ENCODE measurements at regions of chr10 and their contacts with region 1.

Region 1: DNA sequence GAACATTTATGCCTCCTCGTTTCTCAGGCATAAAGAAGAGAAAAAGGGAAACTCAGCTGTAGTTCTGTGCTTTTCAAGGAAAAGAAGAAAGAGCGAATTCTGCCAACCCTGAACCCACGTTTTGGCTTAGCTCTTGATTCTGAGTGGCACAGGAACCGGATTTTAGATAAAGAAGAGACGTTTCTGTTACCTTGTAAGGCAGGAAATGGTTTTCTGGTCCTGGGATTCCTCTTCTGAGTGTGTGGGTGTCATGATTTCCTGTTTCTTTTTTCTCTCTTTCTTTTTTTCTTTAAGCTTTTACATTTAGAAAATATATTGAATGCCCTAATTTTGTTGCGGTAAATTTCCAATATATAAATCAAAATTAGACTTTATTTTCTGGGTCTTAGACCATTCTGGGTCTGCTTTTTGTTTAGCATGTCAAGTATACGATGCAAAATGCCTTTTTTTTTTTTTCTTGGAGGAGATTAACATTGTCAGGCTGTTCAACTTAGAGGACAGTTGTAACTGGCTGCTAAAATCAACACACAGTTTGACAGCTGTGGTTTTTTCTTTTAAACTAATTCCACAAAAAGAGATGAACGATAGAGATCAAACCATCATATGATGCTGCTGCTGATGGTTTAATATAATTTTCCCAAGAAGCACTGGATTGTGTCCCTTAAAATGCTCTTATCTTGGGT is 190.8 kb downstream of the GATA3 start:
- DNase-seq: no peak
- H3K4me3 Mint-ChIP-seq: peak overlapping the region; percentile 58
- H3K27ac Mint-ChIP-seq: peak overlapping the region; percentile 93
- H3K4me1 Mint-ChIP-seq: peaks cover 76% of the 10 kb centered on the region
- H3K27me3 Mint-ChIP-seq: no peaks in the 10 kb centered on the region

Region 2: DNA sequence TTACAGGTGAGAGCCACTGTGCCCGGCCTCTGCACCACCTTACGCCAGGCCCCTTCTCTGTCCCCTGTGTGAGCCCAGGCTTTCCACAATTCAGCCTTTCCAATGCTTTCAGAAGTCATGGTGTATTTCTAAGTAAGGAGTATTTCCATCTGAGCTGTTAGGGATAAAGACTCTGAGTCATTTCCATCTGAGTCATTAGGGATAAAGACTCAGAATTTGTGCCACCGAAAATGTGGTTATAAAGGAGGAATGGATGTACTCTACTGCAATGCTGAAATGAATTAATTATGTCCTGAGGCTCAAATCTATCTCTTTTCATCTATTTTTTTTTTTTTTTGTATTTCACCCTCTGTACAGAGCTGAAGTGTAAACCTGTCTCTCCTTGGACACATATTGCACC is 106.8 kb before region 1 on chr10:
- intact Hi-C with region 1: loop called (anchors 1 kb)
- DNase-seq: no peak
- H3K4me3 Mint-ChIP-seq: peak overlapping the region; percentile 79
- H3K27ac Mint-ChIP-seq: peak overlapping the region; percentile 93
- H3K4me1 Mint-ChIP-seq: peaks cover 63% of the 10 kb centered on the region
- H3K27me3 Mint-ChIP-seq: no peaks in the 10 kb centered on the region

Region 3: DNA sequence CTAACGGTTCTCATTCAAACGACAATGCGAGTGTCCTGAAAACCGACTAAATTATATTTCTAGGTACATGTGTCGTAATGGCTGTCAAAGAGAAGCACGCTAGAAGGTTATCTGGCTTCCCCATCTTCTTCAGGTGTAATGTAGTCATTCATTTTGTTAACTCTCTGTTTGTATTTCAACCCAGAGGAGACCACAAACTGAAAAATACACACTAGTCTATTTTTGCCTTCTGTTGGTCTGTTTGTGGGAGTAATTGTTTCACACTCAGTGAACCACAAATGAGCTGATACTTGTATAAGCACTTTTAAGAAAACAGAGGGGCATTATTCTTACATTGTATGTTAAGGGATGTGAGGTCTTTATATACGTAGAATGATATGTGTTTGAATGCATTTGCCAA is 115.1 kb after region 1 on chr10:
- intact Hi-C with region 1: loop called (anchors 1 kb)
- DNase-seq: peak; percentile 37
- H3K4me3 Mint-ChIP-seq: peak overlapping the region; percentile 70
- H3K27ac Mint-ChIP-seq: peak overlapping the region; percentile 88
- H3K4me1 Mint-ChIP-seq: peaks cover 79% of the 10 kb centered on the region
- H3K27me3 Mint-ChIP-seq: no peaks in the 10 kb centered on the region

Region 4: DNA sequence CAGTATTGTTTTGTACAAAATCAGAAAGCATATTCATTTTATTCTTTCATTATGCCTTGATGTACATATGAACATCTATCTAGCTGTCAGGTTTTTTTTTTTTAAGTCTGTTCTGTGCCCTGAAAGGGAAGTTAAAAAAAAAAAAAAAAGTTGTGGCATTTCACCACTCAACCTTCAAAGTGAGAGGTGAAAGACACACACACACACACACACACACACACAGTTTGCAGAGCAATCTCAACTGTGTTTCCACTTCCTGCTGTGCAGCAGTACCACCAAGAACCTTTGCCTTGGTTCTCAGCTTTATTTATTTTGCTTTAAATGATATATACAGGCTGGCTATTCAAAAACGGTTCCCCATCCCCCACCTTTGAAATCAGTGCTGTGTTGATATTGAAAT is 764.8 kb after region 1 on chr10:
- intact Hi-C with region 1: loop called (anchors 10 kb)
- DNase-seq: peak; percentile 55
- H3K4me3 Mint-ChIP-seq: peak overlapping the region; percentile 5
- H3K27ac Mint-ChIP-seq: peak overlapping the region; percentile 84
- H3K4me1 Mint-ChIP-seq: peaks cover 79% of the 10 kb centered on the region
- H3K27me3 Mint-ChIP-seq: no peaks in the 10 kb centered on the region